ENCODE measurements at regions of chr6 and their contacts with region 1.

Region 1: DNA sequence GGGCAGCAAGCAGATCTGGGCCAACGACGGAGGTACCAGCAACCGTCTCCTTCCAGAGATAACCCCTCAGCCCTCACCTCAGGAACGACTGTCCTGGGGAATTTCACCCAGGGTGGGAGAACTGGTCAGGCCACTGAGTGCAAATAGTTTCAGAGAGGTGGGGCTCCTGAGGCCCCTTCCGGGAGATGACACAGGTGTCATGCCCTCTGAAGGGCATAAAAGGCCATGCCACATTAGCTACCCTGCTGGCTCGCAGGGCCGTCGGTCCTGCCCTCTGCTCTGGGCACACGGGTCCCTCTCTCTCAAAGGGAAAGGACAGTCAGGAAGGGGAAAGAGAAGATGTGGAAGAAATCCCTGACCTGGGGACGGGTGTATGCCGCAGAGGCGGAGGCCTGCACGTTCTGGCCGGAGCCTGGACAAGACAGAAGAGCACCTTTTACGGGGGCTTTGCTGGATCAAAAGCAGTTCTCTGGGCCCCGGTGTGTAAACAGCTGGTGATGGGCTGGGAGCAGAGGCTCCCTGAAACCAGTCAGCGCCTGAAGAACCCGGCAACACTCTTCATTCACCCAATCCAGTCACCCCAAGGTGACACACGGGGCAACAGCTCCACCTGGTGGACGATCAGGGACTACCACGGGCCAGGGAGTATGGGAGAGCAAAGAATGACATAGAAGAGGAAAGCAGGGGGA is 6.4 kb upstream of the TAF8 start:
- DNase-seq: peak; percentile 80 to 94
- H3K4me3 ChIP-seq: no peak overlapping the region
- H3K4me1 ChIP-seq: peaks cover 21% of the 10 kb centered on the region
- H3K27me3 ChIP-seq: no peaks in the 10 kb centered on the region

Region 2: GRCh38 chr6:40788661-40789655 is 1255.0 kb before region 1 on chr6:
- in situ Hi-C with region 1: no loop called
- DNase-seq: no peak
- H3K4me3 ChIP-seq: no peak overlapping the region
- H3K4me1 ChIP-seq: no peaks in the 10 kb centered on the region
- H3K27me3 ChIP-seq: 0 out of 2 replicates have a peak, but pooled peaks cover 2% of the 10 kb centered on the region

Region 3: DNA sequence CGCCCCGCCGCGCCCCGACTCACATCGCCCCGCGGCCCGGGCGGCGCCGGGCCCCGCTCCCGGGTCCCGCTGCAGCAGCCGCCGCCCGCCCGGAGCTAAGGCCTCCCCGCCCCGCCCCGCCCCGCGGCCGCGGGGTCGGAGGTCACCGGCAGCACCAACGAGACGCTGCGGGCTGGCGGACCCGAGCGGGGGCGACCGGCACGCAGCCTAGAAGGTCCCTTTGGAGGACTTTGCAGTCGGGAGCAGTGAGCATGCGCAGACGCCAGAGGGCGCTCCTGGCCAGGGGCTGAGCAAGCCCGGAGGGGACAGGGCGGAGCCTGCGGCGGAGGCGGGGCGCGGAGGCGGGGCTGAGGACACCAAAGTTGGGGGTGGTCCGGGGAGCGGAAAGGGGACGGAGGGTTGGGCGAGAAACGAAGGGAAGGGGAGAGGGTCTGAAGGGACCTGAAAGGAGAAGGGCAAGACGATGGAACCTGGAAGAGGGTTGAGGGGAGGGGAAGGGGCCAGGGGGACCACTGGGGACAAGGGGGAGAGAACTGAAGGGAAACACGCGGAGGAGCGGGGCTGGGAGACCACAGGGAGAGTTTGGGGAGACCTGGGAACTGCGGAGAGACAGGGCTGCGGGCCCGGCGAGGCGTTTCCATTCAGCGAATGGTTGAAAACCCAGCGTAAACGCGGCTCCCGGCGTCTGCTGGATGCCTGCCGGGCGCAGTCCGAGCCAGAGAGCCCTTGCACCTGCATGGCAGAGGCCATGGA is 264.0 kb before region 1 on chr6 and contains the start of gene FRS3:
- in situ Hi-C with region 1: loop called (anchors 5 kb)
- DNase-seq: peak; percentile 84 to 99
- H3K4me3 ChIP-seq: peak within 1 kb of the TSS; percentile 53
- H3K4me1 ChIP-seq: peaks cover 12% of the 10 kb centered on the region
- H3K27me3 ChIP-seq: no peaks in the 10 kb centered on the region

Region 4: DNA sequence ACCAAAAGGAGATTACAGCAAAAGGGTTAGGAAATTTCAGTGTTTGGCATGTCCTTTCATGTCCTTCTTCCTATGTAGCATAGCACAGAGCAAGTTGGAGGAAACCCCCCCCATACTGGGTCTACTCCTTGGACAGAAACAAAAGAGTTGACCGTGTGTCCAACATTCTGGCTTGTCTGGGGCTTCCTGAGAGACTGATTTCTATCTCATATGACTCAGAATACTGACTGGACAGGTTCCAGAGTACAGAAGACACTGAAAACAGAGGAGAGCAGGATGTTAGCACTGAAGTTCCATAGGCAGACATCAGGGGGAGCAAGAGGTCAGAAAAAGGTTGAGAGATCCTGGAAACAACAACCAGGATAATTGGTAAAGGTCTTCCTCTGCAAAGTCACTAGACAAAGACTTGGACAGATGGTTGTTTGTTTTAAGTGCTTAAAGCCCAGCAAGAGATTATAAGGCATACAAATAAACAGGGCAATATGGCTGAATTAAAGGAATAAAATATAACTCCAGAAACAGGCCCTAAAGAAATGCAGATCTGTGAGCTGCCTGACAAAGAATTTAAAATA is 197.2 kb before region 1 on chr6:
- in situ Hi-C with region 1: loop called (anchors 5 kb)
- DNase-seq: peak; percentile 82 to 84
- H3K4me3 ChIP-seq: no peak overlapping the region
- H3K4me1 ChIP-seq: no peaks in the 10 kb centered on the region
- H3K27me3 ChIP-seq: no peaks in the 10 kb centered on the region

Region 5: GRCh38 chr6:41936073-41936837 is 107.7 kb before region 1 on chr6:
- in situ Hi-C with region 1: loop called (anchors 5 kb)
- DNase-seq: peak; percentile 65 to 80
- H3K4me3 ChIP-seq: no peak overlapping the region
- H3K4me1 ChIP-seq: peaks cover 12% of the 10 kb centered on the region
- H3K27me3 ChIP-seq: no peaks in the 10 kb centered on the region

Region 6: DNA sequence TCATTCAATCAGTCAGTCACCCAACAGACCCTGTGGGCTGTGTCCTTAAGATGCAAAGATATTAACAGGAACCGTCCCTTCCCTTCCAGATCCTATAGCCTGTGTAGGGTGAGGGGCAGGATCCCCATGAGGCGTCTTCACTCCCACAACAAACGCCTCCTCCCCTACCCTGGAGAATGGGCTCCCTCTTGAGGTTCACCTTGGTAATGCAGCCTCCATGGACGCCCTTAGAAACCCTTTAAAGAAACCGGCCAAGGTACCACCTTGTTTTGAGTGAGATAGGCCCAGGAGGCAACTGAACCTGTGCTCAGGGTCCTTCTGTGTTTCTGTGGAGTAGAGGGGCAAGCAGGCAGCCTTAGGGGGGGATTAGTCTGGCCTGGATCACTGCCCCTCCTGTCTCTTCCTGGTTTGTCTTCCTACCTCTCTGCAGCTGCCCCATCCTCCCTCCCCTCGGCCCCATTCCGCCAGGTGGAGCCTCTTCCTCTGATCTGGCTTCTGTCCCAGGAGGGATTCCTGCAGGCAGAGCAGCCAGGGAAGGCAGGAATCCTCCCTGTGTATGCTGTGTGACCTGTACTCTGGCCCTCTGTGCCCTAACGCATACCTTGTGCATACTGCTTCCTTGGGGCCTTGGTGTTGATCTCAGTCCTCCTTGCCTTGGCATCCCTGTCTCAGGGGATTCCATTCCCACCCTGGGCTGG is 122.7 kb after region 1 on chr6:
- in situ Hi-C with region 1: no loop called
- DNase-seq: peak; percentile 80 to 93
- H3K4me3 ChIP-seq: no peak overlapping the region
- H3K4me1 ChIP-seq: no peaks in the 10 kb centered on the region
- H3K27me3 ChIP-seq: no peaks in the 10 kb centered on the region

Region 7: GRCh38 chr6:42251911-42252637 is 208.1 kb after region 1 on chr6:
- in situ Hi-C with region 1: no loop called
- DNase-seq: peak in 1 of 2 experiments; percentile 24
- H3K4me3 ChIP-seq: no peak overlapping the region
- H3K4me1 ChIP-seq: no peaks in the 10 kb centered on the region
- H3K27me3 ChIP-seq: no peaks in the 10 kb centered on the region

Measured in HAP-1 (cell line).